Left colon (tissue), 2 donors: ENCODE measurements at regions of chr12 and their contacts with region 1.

Region 1: DNA sequence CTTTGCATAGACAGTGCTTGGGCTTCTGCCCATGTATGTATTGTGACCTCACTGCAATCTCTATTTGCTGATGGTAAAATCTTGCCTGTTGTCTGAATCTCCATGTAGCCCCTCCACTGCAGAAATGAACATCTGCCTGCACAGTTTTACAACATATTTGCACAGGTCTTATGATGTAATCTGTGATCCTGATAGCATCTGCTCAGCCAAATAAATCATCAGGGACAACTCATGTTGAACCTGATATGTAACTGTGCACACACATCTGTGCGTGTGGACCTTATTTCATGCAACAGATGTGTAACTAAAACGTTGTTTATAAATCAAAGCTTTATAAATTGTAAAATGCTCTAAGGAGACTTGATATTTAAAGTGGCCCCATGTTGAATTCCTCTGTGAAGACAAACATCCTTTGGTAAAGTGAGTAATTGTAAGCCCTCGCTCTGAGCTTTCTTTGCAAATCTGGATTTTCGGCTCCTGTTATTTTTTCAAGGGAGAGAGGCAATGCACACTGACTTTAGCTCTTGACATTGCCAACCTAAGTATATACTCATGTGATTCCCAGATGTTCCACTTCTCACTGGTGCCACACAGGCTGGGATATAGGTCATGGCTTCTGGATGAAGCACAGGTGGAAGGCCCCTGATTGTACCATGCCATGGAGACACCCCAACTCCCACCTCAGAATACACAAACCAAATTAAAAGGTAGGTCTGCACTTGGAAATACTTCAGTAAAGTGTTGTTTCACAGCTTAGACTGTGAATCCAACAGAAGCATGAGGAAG is 371.3 kb downstream of the GRIN2B start:
- DNase-seq: no peak
- ATAC-seq: peak; percentile 48

Region 2: GRCh38 chr12:13552830-13553229 is 57.3 kb before region 1 on chr12:
- intact Hi-C with region 1: loop called in 1 of 2 experiments (anchors 2 kb)
- DNase-seq: no peak
- ATAC-seq: no peak